Mammary epithelial cell (primary cell): ENCODE measurements at regions of chr12 and their contacts with region 1.

Region 1: DNA sequence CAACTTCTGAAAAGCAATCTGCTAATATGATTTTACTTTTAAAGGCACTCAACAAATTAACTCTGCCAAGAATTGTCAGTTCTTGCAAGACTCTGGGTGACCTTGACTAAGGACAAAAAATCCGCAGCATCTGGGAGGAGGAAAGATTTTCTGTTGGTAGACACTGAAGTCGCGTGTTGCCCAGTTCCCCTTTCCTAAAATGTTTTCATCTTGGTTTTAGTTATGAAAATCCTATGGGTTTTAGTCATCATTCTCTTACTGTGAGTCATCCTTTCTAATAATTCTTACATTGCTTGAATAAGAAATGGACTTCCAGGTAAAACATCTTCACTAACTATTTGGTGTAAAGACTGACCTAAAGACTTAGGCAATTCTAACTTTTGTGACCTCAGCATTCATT is 9.1 kb downstream of the GSG1 start:
- DNase-seq: peak; percentile 54
- H3K4me3 ChIP-seq: no peak overlapping the region
- H3K27ac ChIP-seq: peak overlapping the region; percentile 54
- H3K4me1 ChIP-seq: peaks cover 41% of the 10 kb centered on the region
- H3K27me3 ChIP-seq: no peaks in the 10 kb centered on the region
- CTCF ChIP-seq: no peak

Region 2: GRCh38 chr12:12999959-13000615 is 94.3 kb before region 1 on chr12 and contains the start of gene HEBP1:
- CTCF ChIA-PET with region 1: no interaction called
- dilution Hi-C with region 1: no loop called
- in situ Hi-C with region 1: no loop called
- intact Hi-C with region 1: loop called (anchors 1 kb)
- DNase-seq: peak; percentile 86
- H3K4me3 ChIP-seq: peak within 1 kb of the TSS; percentile 81 to 94 (median 82)
- H3K27ac ChIP-seq: peak within 1 kb of the TSS; percentile 72
- H3K4me1 ChIP-seq: peaks cover 19% of the 10 kb centered on the region
- H3K27me3 ChIP-seq: no peaks in the 10 kb centered on the region
- CTCF ChIP-seq: no peak
- total RNA-seq, gene HEBP1: 13.5 to 36.5 TPM

Region 3: DNA sequence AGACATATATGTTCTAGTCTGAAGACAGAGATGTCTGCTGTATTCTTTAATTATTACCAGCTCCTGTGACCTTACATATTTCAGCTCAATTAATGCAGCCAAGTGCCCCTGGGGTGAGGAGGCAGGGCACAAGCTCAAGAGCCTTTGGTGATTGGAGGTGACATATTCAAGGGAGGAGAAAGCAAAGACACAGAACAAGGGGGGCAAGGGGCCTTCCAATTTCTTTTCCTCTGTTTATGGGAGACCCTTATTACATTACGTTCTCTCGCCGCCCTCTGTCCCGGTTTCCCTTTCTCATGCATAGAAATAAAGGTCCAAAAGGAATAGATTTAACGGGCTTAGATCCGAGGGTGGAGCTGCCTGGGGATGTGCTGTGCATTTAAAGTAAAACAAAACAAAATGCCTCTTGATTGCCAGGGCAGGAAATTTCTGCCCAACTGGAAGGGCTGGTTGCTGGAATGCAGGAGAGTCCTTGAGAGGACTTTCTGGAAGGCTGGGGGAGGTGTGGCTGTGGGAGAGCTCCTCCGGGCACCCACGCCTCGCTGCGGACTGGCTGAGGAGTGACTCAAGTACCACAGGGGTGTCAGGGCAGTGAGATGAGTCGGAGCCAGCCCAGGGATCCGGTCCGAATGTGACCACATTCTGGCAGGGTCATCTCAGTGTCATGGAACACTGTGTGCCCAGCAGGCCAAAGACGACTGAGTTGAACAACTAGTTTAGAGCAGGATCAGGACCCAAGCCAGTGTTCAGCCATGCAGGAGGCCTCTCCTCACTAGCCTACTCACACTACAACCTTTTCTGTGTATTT is 41.2 kb after region 1 on chr12:
- CTCF ChIA-PET with region 1: no interaction called
- dilution Hi-C with region 1: no loop called
- in situ Hi-C with region 1: no loop called
- intact Hi-C with region 1: loop called (anchors 1 kb)
- DNase-seq: peak; percentile 96
- H3K4me3 ChIP-seq: peak overlapping the region in 2 of 3 experiments; percentile 8 to 24
- H3K27ac ChIP-seq: peak overlapping the region; percentile 80
- H3K4me1 ChIP-seq: peaks cover 45% of the 10 kb centered on the region
- H3K27me3 ChIP-seq: no peaks in the 10 kb centered on the region
- CTCF ChIP-seq: peak in 1 of 2 donors; percentile 42

Region 4: GRCh38 chr12:13165617-13166041 is 71.3 kb after region 1 on chr12:
- CTCF ChIA-PET with region 1: no interaction called
- dilution Hi-C with region 1: no loop called
- in situ Hi-C with region 1: no loop called
- intact Hi-C with region 1: loop called (anchors 1 kb)
- DNase-seq: peak; percentile 99
- H3K4me3 ChIP-seq: no peak overlapping the region
- H3K27ac ChIP-seq: peak overlapping the region; percentile 96
- H3K4me1 ChIP-seq: peaks cover 47% of the 10 kb centered on the region
- H3K27me3 ChIP-seq: no peaks in the 10 kb centered on the region
- CTCF ChIP-seq: no peak